Dorsolateral prefrontal cortex (tissue), 120 donors: ENCODE measurements at regions of chr10 and their contacts with region 1.

Region 1: GRCh38 chr10:80662577-80663261 is 125.0 kb downstream of the SH2D4B start:
- DNase-seq: peak; percentile 62 to 89 (median 83)
- H3K4me3 ChIP-seq: peak overlapping the region in 57 of 59 donors; percentile 3 to 66 (median 47)
- H3K27ac ChIP-seq: peak overlapping the region in 26 of 59 donors; percentile 10 to 79 (median 57)
- H3K27me3 ChIP-seq: no peaks in the 10 kb centered on the region
- CTCF ChIP-seq: peak; percentile 76 to 97 (median 88)

Region 2: GRCh38 chr10:80453701-80454513 is 208.8 kb before region 1 on chr10 and contains the start of gene TSPAN14:
- intact Hi-C with region 1: loop called in 1 of 2 experiments (anchors 5 kb)
- DNase-seq: peak; percentile 40 to 86 (median 72)
- H3K4me3 ChIP-seq: peak within 1 kb of the TSS; percentile 59 to 98 (median 90)
- H3K27ac ChIP-seq: peak within 1 kb of the TSS; percentile 84 to 98 (median 95)
- H3K27me3 ChIP-seq: no peaks in the 10 kb centered on the region
- CTCF ChIP-seq: peak in 12 of 56 donors; percentile 5 to 21 (median 16)
- total RNA-seq, gene TSPAN14: 40.9 to 83.1 (median 60.2) TPM

Region 3: DNA sequence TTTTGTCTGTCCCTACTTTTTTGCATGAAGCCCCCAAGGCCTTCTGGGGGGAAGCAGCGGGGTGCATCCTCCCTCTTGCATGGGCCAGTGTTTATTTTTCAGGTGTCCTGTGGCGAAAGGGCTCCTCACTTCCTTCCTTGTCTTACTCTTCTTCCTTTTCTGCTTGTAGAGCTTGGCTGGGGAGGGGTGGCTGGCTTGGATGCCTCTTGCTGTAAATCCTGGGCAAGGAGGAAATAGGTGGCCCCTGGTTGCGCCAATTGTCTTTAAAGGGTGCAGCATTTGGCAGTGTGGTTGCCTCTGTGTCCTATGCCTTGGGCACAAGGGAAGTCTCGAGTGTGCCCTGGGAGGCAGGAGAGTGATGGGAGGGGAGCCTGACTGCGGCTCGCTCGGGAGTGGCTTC is 30.0 kb before region 1 on chr10:
- intact Hi-C with region 1: no loop called
- DNase-seq: no peak
- H3K4me3 ChIP-seq: no peak overlapping the region
- H3K27ac ChIP-seq: no peak overlapping the region
- H3K27me3 ChIP-seq: no peaks in the 10 kb centered on the region
- CTCF ChIP-seq: no peak

Region 4: DNA sequence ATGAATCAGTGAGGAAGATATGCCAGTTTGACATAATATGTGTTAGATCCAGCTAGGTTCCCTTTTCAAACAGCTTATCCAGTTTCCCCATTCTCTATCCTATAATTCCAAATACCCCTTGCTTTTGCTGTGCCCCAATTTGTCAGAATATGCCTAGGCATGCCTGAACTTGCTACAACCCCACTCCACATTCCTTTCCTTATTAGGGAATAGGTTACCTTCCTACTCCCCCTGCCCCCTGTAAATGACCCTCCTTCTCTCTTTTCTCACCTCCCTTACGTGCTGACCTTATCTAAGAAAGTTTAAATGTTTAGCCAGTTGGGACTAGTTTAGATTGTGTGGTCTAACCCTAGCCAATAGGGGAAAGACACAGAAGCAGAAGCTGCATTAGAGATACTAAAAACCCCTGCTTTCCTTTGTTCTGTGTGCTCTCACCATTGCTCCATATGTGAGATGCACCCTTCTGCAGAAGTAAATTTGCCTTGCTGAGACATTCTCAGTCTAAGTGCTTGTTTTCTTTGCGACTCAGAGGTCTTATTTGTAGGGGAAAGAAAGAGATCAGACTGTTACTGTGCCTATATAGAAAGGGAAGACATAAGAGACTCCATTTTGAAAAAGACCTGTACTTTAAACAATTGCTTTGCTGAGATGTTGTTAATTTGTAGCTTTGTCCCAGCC is 142.8 kb after region 1 on chr10:
- intact Hi-C with region 1: no loop called
- DNase-seq: no peak
- H3K4me3 ChIP-seq: no peak overlapping the region
- H3K27ac ChIP-seq: no peak overlapping the region
- H3K27me3 ChIP-seq: no peaks in the 10 kb centered on the region
- CTCF ChIP-seq: no peak

Region 5: DNA sequence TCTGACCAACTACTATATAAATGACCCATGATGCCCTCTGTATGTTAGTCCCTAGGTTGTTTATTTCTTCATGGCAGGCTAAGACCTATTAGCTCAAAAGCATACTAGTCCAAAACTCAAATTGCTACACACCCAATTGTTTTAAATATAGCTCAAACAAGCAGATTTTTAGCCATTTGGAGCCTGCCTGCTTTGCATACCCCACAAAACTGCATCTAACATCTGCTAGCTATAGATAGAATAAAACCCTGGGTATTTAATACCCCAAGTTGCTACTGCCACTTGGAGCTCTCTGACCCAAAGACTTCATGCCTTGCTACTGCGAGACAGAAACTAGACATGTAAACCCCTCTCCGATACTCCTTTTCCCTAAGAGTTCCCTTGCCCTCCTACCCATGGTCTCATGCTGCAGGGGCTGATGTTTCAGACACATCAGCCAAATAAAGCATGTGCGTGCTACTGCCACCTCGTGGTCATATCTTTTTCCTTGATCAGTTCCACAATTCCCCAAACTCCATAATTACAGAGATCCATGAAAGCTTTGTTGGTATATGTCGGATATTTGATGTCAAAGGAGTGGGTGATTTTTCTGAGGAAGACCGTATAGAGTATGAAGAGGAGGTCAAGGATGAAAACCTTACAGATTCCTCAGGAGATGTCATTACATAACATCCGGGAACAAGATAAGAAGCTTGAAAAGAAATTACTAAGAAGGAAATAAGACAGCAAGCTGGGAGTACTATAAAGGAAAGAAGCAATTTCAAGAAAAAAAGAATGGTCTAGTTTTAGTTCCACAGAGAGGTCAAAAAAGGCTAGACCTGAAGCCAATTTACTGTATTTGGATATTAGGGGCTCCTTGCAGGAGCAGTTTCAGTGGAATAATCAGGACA is 261.6 kb after region 1 on chr10:
- intact Hi-C with region 1: loop called (anchors 5 kb)
- DNase-seq: peak in 4 of 10 donors; percentile 12 to 41 (median 37)
- H3K4me3 ChIP-seq: no peak overlapping the region
- H3K27ac ChIP-seq: no peak overlapping the region
- H3K27me3 ChIP-seq: peaks cover 0 to 3% (median 0%) of the 10 kb centered on the region in 45 donors
- CTCF ChIP-seq: peak; percentile 55 to 84 (median 74)